Activated CD4-positive, alpha-beta memory T cell treated with anti-CD3 and anti-CD28 coated beads for 36 hours (primary cell): ENCODE measurements at regions of chr5 and their contacts with region 1.

Region 1: DNA sequence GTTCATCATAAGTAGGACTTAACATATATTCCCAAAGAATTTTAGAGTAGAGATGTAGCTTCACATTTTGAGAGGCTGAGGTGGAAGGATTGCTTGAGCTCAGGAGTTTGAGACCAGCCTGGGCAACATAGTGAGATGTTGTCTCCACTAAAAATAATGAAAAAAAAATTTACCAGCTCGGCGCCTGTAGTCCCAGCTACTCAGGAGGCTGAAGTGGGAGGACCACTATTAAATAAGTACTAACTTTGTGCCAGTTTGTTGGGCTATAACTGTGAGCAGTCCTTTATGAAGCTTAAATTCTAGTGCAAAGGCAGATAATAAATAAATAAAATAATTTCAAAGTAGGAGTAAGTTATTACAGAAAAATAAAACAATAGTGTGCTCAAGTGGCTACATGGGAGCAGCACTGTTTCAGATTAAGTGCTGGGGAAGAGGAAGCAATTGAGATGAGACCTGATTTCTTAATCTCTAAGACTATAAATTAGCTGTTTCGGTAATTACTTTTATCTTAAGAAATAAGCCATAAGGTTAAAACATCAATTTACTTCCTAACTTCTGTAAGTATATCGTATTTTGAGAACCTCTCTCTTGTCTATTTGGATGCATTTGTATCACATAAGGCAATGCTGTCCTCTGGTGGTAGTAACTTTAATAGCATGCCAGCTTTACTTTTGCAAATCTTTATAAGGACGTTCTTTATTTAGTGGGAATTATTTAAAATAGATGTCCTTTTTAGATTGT is 98.9 kb downstream of the CSNK1G3 start:
- DNase-seq: no peak
- H3K4me3 Mint-ChIP-seq: no peak overlapping the region
- H3K27ac Mint-ChIP-seq: no peak overlapping the region
- H3K4me1 Mint-ChIP-seq: peaks cover 10% of the 10 kb centered on the region
- H3K27me3 Mint-ChIP-seq: no peaks in the 10 kb centered on the region

Region 2: DNA sequence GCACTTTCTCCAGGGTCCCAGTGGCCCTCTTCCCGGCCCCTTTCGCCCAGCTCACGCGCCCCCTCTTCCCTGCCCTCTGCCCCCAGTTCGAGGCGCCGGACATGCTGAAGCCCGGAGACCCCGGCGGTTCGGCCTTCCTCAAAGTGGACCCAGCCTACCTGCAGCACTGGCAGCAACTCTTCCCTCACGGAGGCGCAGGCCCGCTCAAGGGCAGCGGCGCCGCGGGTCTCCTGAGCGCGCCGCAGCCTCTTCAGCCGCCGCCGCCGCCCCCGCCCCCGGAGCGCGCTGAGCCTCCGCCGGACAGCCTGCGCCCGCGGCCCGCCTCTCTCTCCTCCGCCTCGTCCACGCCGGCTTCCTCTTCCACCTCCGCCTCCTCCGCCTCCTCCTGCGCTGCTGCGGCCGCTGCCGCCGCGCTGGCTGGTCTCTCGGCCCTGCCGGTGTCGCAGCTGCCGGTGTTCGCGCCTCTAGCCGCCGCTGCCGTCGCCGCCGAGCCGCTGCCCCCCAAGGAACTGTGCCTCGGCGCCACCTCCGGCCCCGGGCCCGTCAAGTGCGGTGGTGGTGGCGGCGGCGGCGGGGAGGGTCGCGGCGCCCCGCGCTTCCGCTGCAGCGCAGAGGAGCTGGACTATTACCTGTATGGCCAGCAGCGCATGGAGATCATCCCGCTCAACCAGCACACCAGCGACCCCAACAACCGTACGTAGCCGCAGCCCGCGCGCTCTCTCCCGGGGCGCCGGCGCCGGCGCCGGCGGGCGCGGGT is 520.7 kb before region 1 on chr5:
- CTCF ChIA-PET with region 1: interaction called, 3 read pairs
- POLR2A ChIA-PET with region 1: no interaction called
- intact Hi-C with region 1: loop called (anchors 10 kb)
- DNase-seq: no peak
- H3K4me3 Mint-ChIP-seq: no peak overlapping the region
- H3K27ac Mint-ChIP-seq: no peak overlapping the region
- H3K4me1 Mint-ChIP-seq: peaks cover 31% of the 10 kb centered on the region
- H3K27me3 Mint-ChIP-seq: peaks cover 72% of the 10 kb centered on the region

Region 3: DNA sequence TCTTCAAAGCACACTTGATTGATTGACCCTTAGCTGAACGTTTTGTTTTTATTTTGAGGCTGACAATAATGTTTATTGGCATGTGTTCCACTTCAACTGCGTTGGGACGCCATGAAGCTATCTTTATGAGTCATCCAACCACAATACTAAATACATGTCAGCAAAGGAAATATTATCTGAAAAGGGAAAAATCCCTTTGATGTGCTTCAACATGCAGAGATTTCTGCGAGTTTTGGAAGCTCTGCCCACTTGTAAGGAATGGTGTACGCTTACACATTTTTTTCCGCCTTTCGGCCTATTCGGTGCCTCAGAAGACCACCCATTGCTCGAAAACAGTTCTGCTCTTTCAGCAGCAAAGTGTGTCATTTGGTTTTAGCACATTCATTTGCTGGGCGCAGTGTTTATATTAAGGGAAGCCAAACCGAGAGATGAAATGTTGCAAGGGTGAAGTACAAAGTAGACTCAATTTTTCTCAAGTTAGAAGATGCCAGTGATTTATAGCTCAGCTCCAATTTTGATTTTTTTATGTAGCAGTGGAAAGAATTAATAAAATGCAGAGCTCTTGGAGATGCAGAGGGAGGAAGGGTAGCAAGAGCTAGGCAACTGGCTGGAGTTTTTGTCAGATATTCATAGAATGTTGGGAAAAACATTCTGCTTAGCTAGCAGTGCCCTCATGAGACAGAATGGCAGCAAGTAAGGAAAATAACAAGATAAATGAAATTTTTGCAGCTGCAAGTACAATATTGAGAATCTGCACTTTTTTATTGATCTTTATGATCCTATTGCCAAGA is 452.8 kb before region 1 on chr5:
- CTCF ChIA-PET with region 1: no interaction called
- POLR2A ChIA-PET with region 1: no interaction called
- intact Hi-C with region 1: no loop called
- DNase-seq: no peak
- H3K4me3 Mint-ChIP-seq: no peak overlapping the region
- H3K27ac Mint-ChIP-seq: no peak overlapping the region
- H3K4me1 Mint-ChIP-seq: no peaks in the 10 kb centered on the region
- H3K27me3 Mint-ChIP-seq: peaks cover 15% of the 10 kb centered on the region

Region 4: DNA sequence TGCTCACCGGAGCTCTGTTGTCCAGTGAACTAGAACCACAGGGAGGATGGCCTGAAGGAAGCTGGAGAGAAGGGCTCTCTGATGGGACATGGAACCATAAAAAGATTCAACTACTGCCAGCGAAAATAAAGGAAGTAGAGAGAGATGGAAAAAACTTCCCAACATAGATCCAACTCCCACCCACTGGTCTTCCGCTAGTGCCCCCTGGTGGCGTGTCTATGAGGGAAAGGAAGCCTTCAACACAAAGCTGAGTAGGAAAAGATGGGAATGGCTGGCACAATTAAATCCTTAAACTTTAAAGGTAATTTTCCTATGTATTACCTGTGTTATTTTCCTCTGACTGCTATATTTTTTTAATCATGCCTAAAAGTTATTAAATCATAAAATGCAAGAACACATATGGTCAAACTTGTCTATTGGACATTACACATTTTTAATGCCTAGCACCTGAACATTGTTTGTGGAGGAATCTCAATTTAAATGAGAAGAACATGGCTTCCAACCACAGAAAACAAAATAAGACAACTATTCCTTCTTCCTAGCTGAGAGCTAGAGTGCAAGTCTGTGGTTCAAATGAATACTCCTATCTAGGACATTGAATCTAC is 239.2 kb before region 1 on chr5:
- CTCF ChIA-PET with region 1: interaction called, 13 read pairs
- POLR2A ChIA-PET with region 1: no interaction called
- intact Hi-C with region 1: loop called (anchors 5 kb)
- DNase-seq: peak; percentile 34
- H3K4me3 Mint-ChIP-seq: no peak overlapping the region
- H3K27ac Mint-ChIP-seq: no peak overlapping the region
- H3K4me1 Mint-ChIP-seq: no peaks in the 10 kb centered on the region
- H3K27me3 Mint-ChIP-seq: no peaks in the 10 kb centered on the region

Region 5: DNA sequence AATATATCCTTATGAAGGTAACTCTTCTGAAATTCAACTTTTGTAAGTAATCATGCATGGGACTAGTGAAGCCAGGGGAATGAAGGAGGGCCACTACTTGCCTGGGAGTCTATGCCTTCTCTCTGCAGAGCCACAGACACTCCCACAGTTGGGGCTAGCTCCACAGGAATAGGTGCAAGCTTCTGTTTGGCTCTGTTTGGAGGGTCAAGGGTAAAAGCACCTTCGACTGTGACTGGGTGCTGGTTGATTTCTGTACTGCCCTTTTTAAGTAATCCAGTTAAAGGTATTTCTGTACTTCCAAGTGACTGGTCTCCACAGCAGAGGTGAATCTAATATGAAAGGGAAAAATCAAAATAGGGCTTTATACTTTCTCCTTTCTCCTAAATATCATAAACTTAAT is 219.8 kb before region 1 on chr5:
- CTCF ChIA-PET with region 1: interaction called, 7 read pairs
- POLR2A ChIA-PET with region 1: no interaction called
- intact Hi-C with region 1: loop called (anchors 5 kb)
- DNase-seq: no peak
- H3K4me3 Mint-ChIP-seq: no peak overlapping the region
- H3K27ac Mint-ChIP-seq: no peak overlapping the region
- H3K4me1 Mint-ChIP-seq: no peaks in the 10 kb centered on the region
- H3K27me3 Mint-ChIP-seq: no peaks in the 10 kb centered on the region

Region 6: DNA sequence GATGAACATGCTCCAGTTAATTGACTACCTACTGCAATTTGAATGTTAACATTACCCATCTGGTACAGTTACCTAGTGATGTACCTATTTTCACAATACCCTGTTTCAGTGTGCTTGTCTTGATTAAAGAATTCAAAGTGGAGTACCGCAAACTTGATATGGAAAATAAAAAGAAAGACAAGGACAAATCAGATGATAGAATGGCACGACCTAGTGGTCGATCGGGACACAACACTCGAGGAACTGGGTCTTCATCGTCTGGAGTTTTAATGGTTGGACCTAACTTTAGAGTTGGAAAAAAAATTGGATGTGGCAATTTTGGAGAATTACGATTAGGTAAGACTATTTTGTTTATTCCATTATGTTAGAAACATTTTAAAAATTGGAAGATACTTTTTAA is 65.3 kb before region 1 on chr5:
- CTCF ChIA-PET with region 1: interaction called, 3 read pairs
- POLR2A ChIA-PET with region 1: no interaction called
- intact Hi-C with region 1: loop called (anchors 5 kb)
- DNase-seq: peak; percentile 22
- H3K4me3 Mint-ChIP-seq: no peak overlapping the region
- H3K27ac Mint-ChIP-seq: no peak overlapping the region
- H3K4me1 Mint-ChIP-seq: peaks cover 60% of the 10 kb centered on the region
- H3K27me3 Mint-ChIP-seq: no peaks in the 10 kb centered on the region

Region 7: DNA sequence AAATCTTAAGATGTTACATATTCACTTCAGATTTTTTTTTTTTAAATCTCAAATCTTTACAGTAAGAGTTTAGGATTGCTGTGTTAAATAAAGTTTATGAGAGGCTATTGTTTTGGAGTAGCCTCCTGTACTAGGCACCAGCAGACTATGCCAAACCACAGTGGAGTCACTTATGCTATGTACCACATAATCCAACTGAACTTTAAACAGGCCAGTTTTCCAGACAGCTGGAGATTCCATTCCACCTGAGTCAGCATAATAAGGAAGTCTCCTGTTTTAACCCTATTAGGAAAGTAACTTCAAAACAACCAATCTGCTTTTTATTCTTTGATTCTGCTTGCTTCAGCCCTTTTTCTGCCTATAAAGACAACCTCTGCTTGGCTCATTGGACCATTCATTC is 106.3 kb after region 1 on chr5:
- CTCF ChIA-PET with region 1: no interaction called
- POLR2A ChIA-PET with region 1: no interaction called
- intact Hi-C with region 1: no loop called
- DNase-seq: no peak
- H3K4me3 Mint-ChIP-seq: no peak overlapping the region
- H3K27ac Mint-ChIP-seq: no peak overlapping the region
- H3K4me1 Mint-ChIP-seq: no peaks in the 10 kb centered on the region
- H3K27me3 Mint-ChIP-seq: no peaks in the 10 kb centered on the region

Region 8: DNA sequence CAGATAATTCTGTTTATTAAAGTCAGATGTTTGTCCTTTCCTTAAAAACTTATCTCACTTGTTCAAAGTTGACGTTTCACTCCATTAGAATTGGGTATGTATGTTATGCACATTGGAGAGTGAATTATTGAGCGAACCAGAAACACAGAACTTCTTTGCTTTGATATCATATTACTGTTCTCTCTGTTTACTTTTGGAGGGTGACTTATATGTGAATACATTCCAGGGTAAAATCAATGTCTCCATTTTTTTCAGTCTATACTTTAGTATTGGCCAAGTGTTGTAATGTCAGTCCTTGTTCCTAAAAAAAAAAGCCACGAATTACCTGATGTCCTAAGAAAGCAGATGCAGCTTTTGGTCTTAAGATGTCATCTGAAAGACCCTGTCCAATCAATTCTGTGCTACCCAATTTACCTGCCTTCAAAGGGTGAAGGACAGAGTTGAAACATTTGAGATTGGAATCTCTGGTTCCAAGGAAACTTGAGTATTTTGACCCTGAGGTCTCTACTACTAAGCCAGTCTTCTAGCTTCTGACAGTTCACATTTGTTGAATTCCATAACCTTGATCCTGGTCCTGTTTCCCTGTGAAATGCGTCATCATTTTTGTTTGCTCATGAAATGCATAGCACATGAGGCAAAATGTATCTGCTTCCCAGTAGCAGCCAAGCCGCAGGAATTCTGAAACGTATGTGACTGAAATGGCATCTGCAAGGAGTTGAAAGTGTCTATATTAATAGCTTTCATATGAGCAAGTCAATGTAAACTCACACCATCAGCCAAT is 208.8 kb after region 1 on chr5:
- CTCF ChIA-PET with region 1: no interaction called
- POLR2A ChIA-PET with region 1: no interaction called
- intact Hi-C with region 1: no loop called
- DNase-seq: no peak
- H3K4me3 Mint-ChIP-seq: no peak overlapping the region
- H3K27ac Mint-ChIP-seq: no peak overlapping the region
- H3K4me1 Mint-ChIP-seq: no peaks in the 10 kb centered on the region
- H3K27me3 Mint-ChIP-seq: no peaks in the 10 kb centered on the region